HepG2 (cell line): ENCODE measurements at regions of chr1 and their contacts with region 1.

Region 1: GRCh38 chr1:119816407-119816806 is 5.1 kb upstream of the REG4 start:
- DNase-seq: peak; percentile 87
- ATAC-seq: peak; percentile 88
- H3K4me3 ChIP-seq: no peak overlapping the region
- H3K27ac ChIP-seq: peak overlapping the region; percentile 69
- H3K4me1 ChIP-seq: peaks cover 48% of the 10 kb centered on the region
- H3K27me3 ChIP-seq: no peaks in the 10 kb centered on the region
- CTCF ChIP-seq: no peak
- EP300 ChIP-seq: peak in 1 of 2 experiments; percentile 88; a peak in 2 of 4 replicates
- POLR2A ChIP-seq: 0 out of 4 replicates have a peak, but pooled peaks of 1 of the 2 experiments have one; percentile 35
- RAD21 ChIP-seq: no peak

Region 2: GRCh38 chr1:119859647-119860046 is 43.2 kb after region 1 on chr1:
- CTCF ChIA-PET with region 1: no interaction called
- POLR2A ChIA-PET with region 1: no interaction called
- in situ Hi-C with region 1: loop called (anchors 10 kb)
- intact Hi-C with region 1: no loop called
- DNase-seq: no peak
- ATAC-seq: no peak
- H3K4me3 ChIP-seq: no peak overlapping the region
- H3K27ac ChIP-seq: no peak overlapping the region
- H3K4me1 ChIP-seq: peaks cover 20% of the 10 kb centered on the region
- H3K27me3 ChIP-seq: peaks cover 0 to 3% of the 10 kb centered on the region in 2 experiments; a peak in 2 of 5 replicates
- CTCF ChIP-seq: no peak
- EP300 ChIP-seq: no peak
- POLR2A ChIP-seq: no peak
- RAD21 ChIP-seq: no peak